ENCODE measurements at regions of chr10 and their contacts with region 1.

Region 1: GRCh38 chr10:74753442-74754211 is 72.8 kb upstream of the KAT6B start:
- DNase-seq: no peak
- H3K4me3 Mint-ChIP-seq: no peak overlapping the region
- H3K27ac Mint-ChIP-seq: no peak overlapping the region
- H3K4me1 Mint-ChIP-seq: peaks cover 6% of the 10 kb centered on the region
- H3K27me3 Mint-ChIP-seq: no peaks in the 10 kb centered on the region

Region 2: DNA sequence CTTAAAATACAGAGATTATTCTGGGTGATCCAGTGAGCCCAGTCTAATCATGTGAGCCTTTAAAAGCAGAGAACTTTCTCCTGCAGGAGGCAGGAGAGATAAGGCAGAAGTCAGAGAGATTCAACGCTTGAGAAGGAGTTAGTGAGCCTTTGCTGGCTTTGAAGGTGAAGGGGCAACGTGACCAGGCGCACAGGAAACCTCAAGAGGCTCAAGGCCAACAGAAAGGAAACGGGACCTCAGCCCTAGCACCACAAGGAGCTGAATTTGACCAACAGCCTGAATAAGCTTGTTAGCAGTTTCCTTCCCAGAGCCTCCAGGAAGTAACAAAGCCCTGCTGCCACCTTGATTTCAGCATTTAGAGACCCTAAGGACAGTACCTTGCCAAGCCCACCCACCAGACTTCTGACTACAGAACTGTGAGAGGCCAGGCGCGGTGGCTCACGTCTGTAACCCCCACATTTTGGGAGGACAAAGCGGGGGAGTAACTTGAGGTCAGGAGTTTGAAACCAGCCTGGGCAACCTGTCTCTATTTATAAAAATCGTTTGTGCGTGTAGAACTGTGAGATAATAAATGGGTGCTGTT is 14.6 kb before region 1 on chr10:
- CTCF ChIA-PET with region 1: interaction called, 12 read pairs
- DNase-seq: peak; percentile 51
- H3K4me3 Mint-ChIP-seq: no peak overlapping the region
- H3K27ac Mint-ChIP-seq: peak overlapping the region; percentile 75
- H3K4me1 Mint-ChIP-seq: peaks cover 20% of the 10 kb centered on the region
- H3K27me3 Mint-ChIP-seq: no peaks in the 10 kb centered on the region

Measured in activated naive CD4-positive, alpha-beta T cell treated with anti-CD3 and anti-CD28 coated beads, Interleukin-2, amount 10 ng/mL, durations not matched to agents 7 days and 5 days (primary cell).